ENCODE measurements at regions of chr1 and their contacts with region 1.

Region 1: GRCh38 chr1:26500488-26501175 is 28.4 kb downstream of the HMGN2 start:
- DNase-seq: peak; percentile 75 to 87 (median 83)
- H3K4me3 ChIP-seq: peak overlapping the region; percentile 62 to 94 (median 83)
- H3K27ac ChIP-seq: peak overlapping the region; percentile 50 to 86
- H3K4me1 ChIP-seq: peaks cover 0 to 31% (median 29%) of the 10 kb centered on the region in 4 experiments
- H3K27me3 ChIP-seq: no peaks in the 10 kb centered on the region

Region 2: DNA sequence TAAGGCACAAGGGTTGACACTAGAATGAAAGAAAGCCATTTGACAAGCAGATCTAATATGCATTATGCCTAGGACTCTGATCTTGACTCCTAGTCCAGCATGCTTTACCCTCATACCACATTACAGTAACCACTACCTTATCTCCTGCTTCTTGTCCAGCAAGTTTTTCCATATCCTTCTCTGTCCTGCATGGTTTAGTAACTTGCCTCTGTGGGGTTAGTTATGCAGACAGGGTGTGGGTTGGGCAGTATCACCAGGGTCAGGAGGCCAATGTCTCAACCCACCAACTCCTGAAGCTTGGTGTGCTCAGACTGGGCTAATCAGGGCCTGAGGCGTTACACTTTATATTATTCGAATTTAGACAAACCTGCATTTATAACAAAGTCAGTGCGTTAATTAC is 49.7 kb before region 1 on chr1:
- CTCF ChIA-PET with region 1: no interaction called
- POLR2A ChIA-PET with region 1: no interaction called
- DNase-seq: no peak
- H3K4me3 ChIP-seq: no peak overlapping the region
- H3K27ac ChIP-seq: no peak overlapping the region
- H3K4me1 ChIP-seq: no peaks in the 10 kb centered on the region
- H3K27me3 ChIP-seq: no peaks in the 10 kb centered on the region

Region 3: DNA sequence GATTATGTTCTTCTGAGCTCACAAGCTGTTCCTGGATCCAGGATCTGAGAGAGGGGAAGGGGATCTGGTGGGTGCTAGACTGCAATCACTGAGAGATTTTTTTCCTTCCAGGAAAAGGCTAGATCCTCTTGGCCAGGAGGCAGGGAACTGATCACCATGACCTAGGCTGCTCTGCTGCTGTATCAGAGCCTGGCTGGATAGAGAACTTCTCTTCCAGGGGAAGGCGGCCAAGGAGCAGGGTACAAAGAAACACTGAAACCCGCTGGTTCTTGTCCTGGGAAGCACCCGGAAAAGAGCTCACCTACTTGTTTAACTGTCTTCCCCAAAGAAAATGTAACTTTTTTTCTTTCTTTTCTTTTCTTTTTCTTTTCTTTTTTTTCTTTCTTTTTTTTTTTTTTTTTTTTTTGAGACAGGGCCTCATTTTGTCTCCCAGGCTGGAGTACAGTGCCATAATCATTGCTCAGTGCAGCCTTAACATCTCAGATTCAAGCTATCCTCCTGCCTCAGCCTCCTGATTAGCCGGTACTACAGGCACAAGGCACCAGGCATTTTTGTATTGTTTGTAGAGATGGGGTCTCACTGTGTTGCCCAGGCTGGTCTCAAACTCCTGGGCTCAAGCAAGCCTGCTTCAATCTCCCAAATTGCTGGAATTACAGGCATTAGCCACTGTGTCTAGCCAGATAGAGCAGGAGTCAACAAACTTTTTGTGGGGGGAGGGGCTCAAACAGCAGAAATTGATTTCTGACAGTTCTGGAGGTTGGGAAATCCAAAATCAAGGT is 16.5 kb after region 1 on chr1:
- CTCF ChIA-PET with region 1: interaction called, 14 read pairs
- POLR2A ChIA-PET with region 1: no interaction called
- DNase-seq: no peak
- H3K4me3 ChIP-seq: no peak overlapping the region
- H3K27ac ChIP-seq: no peak overlapping the region
- H3K4me1 ChIP-seq: no peaks in the 10 kb centered on the region
- H3K27me3 ChIP-seq: no peaks in the 10 kb centered on the region

Region 4: GRCh38 chr1:26524181-26524580 is 23.5 kb after region 1 on chr1:
- CTCF ChIA-PET with region 1: interaction called, 35 read pairs
- POLR2A ChIA-PET with region 1: no interaction called
- DNase-seq: no peak
- H3K4me3 ChIP-seq: no peak overlapping the region
- H3K27ac ChIP-seq: no peak overlapping the region
- H3K4me1 ChIP-seq: peaks cover 0 to 6% (median 2%) of the 10 kb centered on the region in 4 experiments
- H3K27me3 ChIP-seq: no peaks in the 10 kb centered on the region

Region 5: DNA sequence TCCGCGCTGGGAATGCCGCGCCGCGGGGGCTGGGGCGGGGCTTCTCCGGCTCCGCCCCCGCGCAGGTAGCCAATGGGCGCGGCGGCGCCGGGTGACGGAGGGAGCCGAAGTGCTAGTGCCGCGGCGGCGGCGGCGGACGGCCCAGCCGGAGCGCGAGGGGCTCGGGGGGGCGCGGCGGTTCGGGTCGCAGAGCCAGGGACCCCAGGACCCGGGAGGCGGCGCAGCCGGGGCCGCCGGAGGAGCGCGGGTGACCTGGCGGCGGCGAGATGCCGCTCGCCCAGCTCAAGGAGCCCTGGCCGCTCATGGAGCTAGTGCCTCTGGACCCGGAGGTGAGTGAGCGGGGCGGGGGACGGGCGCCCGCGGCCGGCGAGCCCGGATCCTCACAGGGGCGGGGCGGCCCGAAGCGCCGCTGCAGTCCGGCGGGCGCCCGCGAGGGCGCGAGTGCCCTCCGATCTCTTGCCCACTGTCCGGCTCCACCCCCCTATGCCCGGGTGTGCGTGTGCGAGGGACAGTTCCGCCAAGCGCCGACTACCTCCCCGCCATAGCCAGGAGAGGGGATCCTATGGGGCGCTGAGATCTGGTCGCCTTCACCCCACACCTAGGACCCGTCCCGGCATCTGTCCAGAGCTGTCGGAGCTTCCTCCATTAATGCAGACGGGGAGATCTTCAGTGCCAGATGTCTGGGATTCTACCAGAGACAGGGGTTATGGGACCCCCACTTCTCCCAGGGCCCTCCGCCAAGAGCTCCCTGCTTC is 29.2 kb after region 1 on chr1 and contains the start of gene RPS6KA1:
- CTCF ChIA-PET with region 1: interaction called, 35 read pairs
- POLR2A ChIA-PET with region 1: interaction called, 10 read pairs
- DNase-seq: peak; percentile 35 to 47 (median 46)
- H3K4me3 ChIP-seq: peak within 1 kb of the TSS; percentile 68 to 89 (median 78)
- H3K27ac ChIP-seq: peak within 1 kb of the TSS in 1 of 2 experiments; percentile 58
- H3K4me1 ChIP-seq: peaks cover 8 to 50% (median 37%) of the 10 kb centered on the region in 4 experiments
- H3K27me3 ChIP-seq: no peaks in the 10 kb centered on the region

Region 6: GRCh38 chr1:26541816-26542711 is 41.4 kb after region 1 on chr1:
- CTCF ChIA-PET with region 1: interaction called, 22 read pairs
- POLR2A ChIA-PET with region 1: interaction called, 6 read pairs
- DNase-seq: peak; percentile 95 to 98 (median 98)
- H3K4me3 ChIP-seq: peak overlapping the region in 6 of 7 experiments; percentile 30 to 65 (median 39)
- H3K27ac ChIP-seq: peak overlapping the region; percentile 59 to 81
- H3K4me1 ChIP-seq: peaks cover 21 to 99% (median 93%) of the 10 kb centered on the region in 4 experiments
- H3K27me3 ChIP-seq: no peaks in the 10 kb centered on the region